ENCODE measurements at regions of chr10 and their contacts with region 1.

Region 1: GRCh38 chr10:51074238-51075028 is at the start of gene PRKG1:
- DNase-seq: no peak
- H3K4me3 Mint-ChIP-seq: peak within 1 kb of the TSS; percentile 80
- H3K27ac Mint-ChIP-seq: peak within 1 kb of the TSS; percentile 17
- H3K4me1 Mint-ChIP-seq: no peaks in the 10 kb centered on the region
- H3K27me3 Mint-ChIP-seq: peaks cover 88% of the 10 kb centered on the region
- CTCF ChIP-seq: no peak
- total RNA-seq, gene PRKG1: 0.09 and 0.10 TPM in 2 replicates

Region 2: GRCh38 chr10:50824782-50825181 is 249.7 kb before region 1 on chr10:
- CTCF ChIA-PET with region 1: no interaction called
- POLR2A ChIA-PET with region 1: no interaction called
- intact Hi-C with region 1: no loop called
- DNase-seq: no peak
- H3K4me3 Mint-ChIP-seq: no peak overlapping the region
- H3K27ac Mint-ChIP-seq: no peak overlapping the region
- H3K4me1 Mint-ChIP-seq: no peaks in the 10 kb centered on the region
- H3K27me3 Mint-ChIP-seq: peaks cover 76% of the 10 kb centered on the region
- CTCF ChIP-seq: no peak

Region 3: DNA sequence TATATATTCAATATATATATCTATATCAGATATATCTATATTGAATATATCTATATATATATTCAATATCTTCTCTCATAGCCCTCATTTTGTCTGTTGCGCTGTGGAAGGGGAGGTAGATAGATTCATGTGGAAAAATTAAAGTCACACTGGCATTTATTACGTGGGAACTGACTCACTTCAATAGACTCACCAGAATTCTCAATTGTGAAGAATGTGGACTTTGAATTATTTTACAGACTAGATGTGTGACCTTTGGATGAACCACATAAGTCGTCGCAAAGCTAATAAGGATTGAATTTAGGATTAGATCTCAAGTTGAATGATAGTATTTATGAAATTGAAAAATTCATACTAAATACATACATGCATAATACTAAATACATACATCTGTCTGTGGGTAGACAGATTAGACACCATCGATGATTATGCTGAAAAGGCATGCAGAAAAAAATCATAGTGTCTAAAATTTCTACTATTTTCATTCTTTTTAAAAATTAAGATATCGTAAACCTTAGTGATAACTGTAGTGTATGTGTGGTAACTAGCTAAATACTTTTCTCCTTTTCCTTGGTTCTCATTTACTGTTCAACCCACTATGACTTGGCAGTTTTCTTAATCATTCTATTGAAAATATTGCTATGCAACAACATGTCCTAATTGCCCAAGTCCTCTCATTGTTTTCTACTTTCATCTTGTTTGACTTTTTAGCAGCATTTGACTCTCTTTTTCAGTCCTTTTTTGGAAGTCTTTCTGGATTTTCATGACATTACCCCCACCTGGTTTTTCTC is 127.2 kb before region 1 on chr10:
- CTCF ChIA-PET with region 1: no interaction called
- POLR2A ChIA-PET with region 1: no interaction called
- intact Hi-C with region 1: no loop called
- DNase-seq: no peak
- H3K4me3 Mint-ChIP-seq: no peak overlapping the region
- H3K27ac Mint-ChIP-seq: no peak overlapping the region
- H3K4me1 Mint-ChIP-seq: no peaks in the 10 kb centered on the region
- H3K27me3 Mint-ChIP-seq: peaks cover 56% of the 10 kb centered on the region
- CTCF ChIP-seq: no peak

Region 4: GRCh38 chr10:51176976-51177695 is 102.7 kb after region 1 on chr10:
- CTCF ChIA-PET with region 1: no interaction called
- POLR2A ChIA-PET with region 1: no interaction called
- intact Hi-C with region 1: loop called (anchors 10 kb)
- DNase-seq: peak; percentile 3
- H3K4me3 Mint-ChIP-seq: no peak overlapping the region
- H3K27ac Mint-ChIP-seq: no peak overlapping the region
- H3K4me1 Mint-ChIP-seq: peaks cover 7% of the 10 kb centered on the region
- H3K27me3 Mint-ChIP-seq: no peaks in the 10 kb centered on the region
- CTCF ChIP-seq: no peak

Region 5: DNA sequence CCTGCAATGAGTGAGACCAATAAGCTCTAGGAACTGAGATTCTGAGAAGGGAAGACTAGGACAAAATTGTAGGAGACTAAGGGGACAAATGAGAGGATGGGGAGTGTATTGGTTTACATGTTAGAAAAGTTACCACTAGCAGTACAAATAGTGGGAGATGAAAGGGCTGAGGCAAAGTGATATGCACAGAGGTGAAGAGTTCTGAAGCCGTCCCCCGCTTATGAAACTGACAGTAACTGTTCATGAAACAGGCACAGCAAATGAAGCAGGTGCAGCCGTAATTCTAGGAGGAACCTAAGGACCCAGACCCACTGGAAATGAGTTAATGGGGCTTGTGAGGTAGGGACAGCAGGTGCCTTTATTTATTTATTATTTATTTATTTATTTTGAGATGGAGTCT is 211.2 kb after region 1 on chr10:
- CTCF ChIA-PET with region 1: no interaction called
- POLR2A ChIA-PET with region 1: no interaction called
- intact Hi-C with region 1: no loop called
- DNase-seq: no peak
- H3K4me3 Mint-ChIP-seq: no peak overlapping the region
- H3K27ac Mint-ChIP-seq: no peak overlapping the region
- H3K4me1 Mint-ChIP-seq: no peaks in the 10 kb centered on the region
- H3K27me3 Mint-ChIP-seq: no peaks in the 10 kb centered on the region
- CTCF ChIP-seq: no peak

Region 6: GRCh38 chr10:51397695-51398094 is 323.3 kb after region 1 on chr10:
- CTCF ChIA-PET with region 1: interaction called, 4 read pairs
- POLR2A ChIA-PET with region 1: no interaction called
- intact Hi-C with region 1: loop called (anchors 1 kb)
- DNase-seq: peak; percentile 92
- H3K4me3 Mint-ChIP-seq: no peak overlapping the region
- H3K27ac Mint-ChIP-seq: no peak overlapping the region
- H3K4me1 Mint-ChIP-seq: peaks cover 8% of the 10 kb centered on the region
- H3K27me3 Mint-ChIP-seq: no peaks in the 10 kb centered on the region
- CTCF ChIP-seq: no peak

Measured in MCF 10A (cell line).